ENCODE measurements at regions of chr12 and their contacts with region 1.

Region 1: DNA sequence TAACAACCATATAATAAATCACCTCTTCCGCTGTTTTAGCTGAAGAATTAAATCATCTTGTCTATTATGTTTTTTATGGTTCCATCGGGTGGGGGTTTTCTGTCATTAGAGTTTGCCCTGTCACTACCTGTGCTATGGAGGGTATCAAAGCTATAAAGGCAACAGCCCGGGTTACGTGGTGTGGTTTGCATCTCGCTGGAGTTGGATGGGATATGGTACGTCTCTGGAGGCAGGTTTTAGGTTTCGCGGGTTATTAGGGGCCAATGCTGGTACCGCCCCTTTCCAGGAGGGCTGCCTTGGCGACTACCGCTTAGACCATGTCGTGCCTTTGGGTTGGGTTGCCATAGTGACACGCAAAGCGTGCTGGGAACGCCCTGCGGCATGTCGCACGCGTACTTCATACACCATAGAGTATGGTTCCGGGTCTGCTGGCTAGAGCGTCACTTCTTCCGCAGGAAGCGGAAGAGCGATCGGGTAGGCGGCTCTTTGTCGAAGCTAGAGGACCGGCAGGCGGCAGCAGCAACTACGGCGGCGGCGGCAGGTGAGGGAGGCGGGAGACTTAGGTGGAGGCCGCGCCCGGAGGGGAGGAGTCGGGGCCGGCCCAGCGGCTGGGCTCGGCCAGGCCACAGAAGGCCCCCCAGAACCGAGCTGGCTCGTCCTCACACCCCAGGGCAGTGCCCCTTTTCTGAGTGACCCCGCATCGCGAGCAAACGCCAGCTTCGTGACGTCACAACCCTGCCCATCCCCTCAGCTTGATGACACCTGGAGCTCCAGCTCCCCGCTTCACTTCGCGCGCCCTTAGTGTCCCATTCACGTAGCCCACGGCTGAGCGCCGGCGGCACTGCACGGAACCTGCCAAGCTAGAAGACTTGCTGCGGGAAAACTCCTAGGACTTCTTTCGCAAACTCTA is at the start of gene ZC3H10:
- DNase-seq: peak; percentile 93 to 100 (median 98)
- H3K4me3 ChIP-seq: peak within 1 kb of the TSS; percentile 93
- H3K4me3 Mint-ChIP-seq: peak within 1 kb of the TSS; percentile 89 to 100 (median 99)
- H3K27ac ChIP-seq: peak within 1 kb of the TSS; percentile 99
- H3K27ac Mint-ChIP-seq: peak within 1 kb of the TSS; percentile 96 to 100 (median 98)
- H3K4me1 ChIP-seq: peaks cover 34% of the 10 kb centered on the region
- H3K4me1 Mint-ChIP-seq: peaks cover 37 to 43% (median 38%) of the 10 kb centered on the region in 3 donors
- H3K27me3 ChIP-seq: no peaks in the 10 kb centered on the region
- H3K27me3 Mint-ChIP-seq: peaks cover 0 to 10% of the 10 kb centered on the region in 2 donors
- total RNA-seq, gene ZC3H10: 8.1 to 9.0 TPM

Region 2: DNA sequence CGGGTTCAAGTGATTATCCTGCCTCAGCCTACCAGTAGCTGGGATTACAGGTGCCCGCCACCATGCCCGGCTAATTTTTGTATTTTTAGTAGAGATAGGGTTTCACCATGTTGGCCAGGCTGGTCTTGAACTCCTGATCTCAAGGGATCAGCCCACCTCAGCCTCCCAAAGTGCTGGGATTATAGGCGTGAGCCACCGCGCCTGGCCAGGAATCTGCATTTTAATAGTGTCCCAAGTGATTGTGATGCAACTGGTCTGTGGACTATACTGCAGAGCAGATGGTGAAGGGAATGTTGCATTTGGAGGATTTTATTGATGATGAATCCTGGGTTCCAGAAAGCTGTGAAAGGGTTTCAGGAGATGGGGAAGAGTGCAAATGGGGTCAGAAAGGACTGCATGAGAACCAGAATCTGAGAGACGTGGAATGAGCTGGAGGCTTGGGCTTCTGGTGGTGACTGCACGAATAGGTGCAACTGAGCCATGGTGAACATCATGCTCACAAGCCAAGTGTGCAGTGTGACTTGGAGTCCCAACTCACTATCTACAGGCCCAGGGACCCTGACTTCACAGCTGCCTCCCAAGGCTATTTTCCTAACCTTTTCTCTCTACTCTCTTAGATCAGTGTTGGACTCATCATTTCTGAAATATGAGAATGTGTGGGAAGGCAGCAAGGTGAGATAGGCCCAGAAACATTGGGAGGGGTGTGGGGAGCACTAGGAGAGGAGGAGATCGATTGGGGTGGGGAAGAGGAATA is 71.8 kb before region 1 on chr12:
- CTCF ChIA-PET with region 1: interaction called, 47 read pairs
- POLR2A ChIA-PET with region 1: interaction called, 8 read pairs
- DNase-seq: no peak
- H3K4me3 ChIP-seq: no peak overlapping the region
- H3K4me3 Mint-ChIP-seq: no peak overlapping the region
- H3K27ac ChIP-seq: no peak overlapping the region
- H3K27ac Mint-ChIP-seq: peak overlapping the region in 7 of 8 donors; percentile 50 to 83 (median 63)
- H3K4me1 ChIP-seq: peaks cover 15% of the 10 kb centered on the region
- H3K4me1 Mint-ChIP-seq: peaks cover 26 to 29% (median 29%) of the 10 kb centered on the region in 3 donors
- H3K27me3 ChIP-seq: no peaks in the 10 kb centered on the region
- H3K27me3 Mint-ChIP-seq: peaks cover 0 to 5% of the 10 kb centered on the region in 2 donors

Region 3: GRCh38 chr12:56104109-56104814 is 13.8 kb before region 1 on chr12 and contains the start of gene PA2G4:
- CTCF ChIA-PET with region 1: interaction called, 89 read pairs
- POLR2A ChIA-PET with region 1: interaction called, 115 read pairs
- DNase-seq: peak; percentile 90 to 98 (median 96)
- H3K4me3 ChIP-seq: peak within 1 kb of the TSS; percentile 79
- H3K4me3 Mint-ChIP-seq: peak within 1 kb of the TSS; percentile 97 to 100 (median 98)
- H3K27ac ChIP-seq: peak within 1 kb of the TSS; percentile 82
- H3K27ac Mint-ChIP-seq: peak within 1 kb of the TSS; percentile 95 to 99 (median 98)
- H3K4me1 ChIP-seq: peaks cover 40% of the 10 kb centered on the region
- H3K4me1 Mint-ChIP-seq: peaks cover 61 to 68% (median 62%) of the 10 kb centered on the region in 3 donors
- H3K27me3 ChIP-seq: no peaks in the 10 kb centered on the region
- H3K27me3 Mint-ChIP-seq: no peaks in the 10 kb centered on the region
- total RNA-seq, gene PA2G4: 468 to 504 TPM

Region 4: DNA sequence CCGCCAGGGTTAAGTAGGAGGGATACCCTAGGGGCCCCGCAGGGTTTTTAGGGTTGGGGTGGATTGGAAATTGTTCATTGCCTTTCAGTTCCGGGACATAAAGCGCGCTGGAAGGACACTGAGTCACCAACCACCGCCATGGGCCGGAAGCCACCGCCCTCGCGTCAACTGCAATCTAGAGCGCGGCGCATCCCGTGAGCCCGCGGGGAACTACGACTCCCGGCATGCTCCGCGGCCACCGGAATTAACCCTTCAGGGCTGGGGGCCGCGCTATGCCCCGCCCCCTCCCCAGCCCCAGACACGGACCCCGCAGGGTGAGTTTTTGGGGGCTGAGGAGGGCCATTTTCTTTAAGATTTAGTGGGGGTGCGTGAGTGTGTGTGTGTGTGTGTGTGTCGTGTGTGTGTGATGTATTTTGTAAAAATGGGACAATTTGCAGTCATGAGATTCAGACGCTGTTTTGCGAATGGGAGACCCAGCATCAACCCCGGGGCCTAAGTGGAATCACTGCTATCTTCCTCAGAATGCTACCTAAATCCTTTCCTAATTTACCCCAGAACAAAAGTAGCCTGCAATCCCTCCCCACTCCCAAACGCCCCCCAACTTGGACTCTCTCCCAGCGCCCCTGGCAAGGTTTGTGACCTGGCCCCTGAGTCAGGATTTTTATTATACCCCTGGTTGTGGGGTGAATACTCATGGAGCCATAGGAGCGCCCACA is 34.4 kb after region 1 on chr12 and contains the start of gene MYL6B:
- CTCF ChIA-PET with region 1: interaction called, 16 read pairs
- POLR2A ChIA-PET with region 1: interaction called, 14 read pairs
- DNase-seq: peak; percentile 84 to 94 (median 87)
- H3K4me3 ChIP-seq: peak within 1 kb of the TSS; percentile 60
- H3K4me3 Mint-ChIP-seq: peak within 1 kb of the TSS; percentile 89 to 98 (median 91)
- H3K27ac ChIP-seq: peak within 1 kb of the TSS; percentile 80
- H3K27ac Mint-ChIP-seq: peak within 1 kb of the TSS; percentile 94 to 98 (median 97)
- H3K4me1 ChIP-seq: peaks cover 29% of the 10 kb centered on the region
- H3K4me1 Mint-ChIP-seq: peaks cover 33 to 38% (median 35%) of the 10 kb centered on the region in 3 donors
- H3K27me3 ChIP-seq: no peaks in the 10 kb centered on the region
- H3K27me3 Mint-ChIP-seq: no peaks in the 10 kb centered on the region
- total RNA-seq, gene MYL6B: 68.6 to 70.0 TPM

Region 5: GRCh38 chr12:56224102-56224701 is 106.2 kb after region 1 on chr12 and contains the start of gene NABP2:
- CTCF ChIA-PET with region 1: interaction called, 42 read pairs
- POLR2A ChIA-PET with region 1: interaction called, 16 read pairs
- DNase-seq: peak; percentile 90 to 94 (median 92)
- H3K4me3 ChIP-seq: peak within 1 kb of the TSS; percentile 67
- H3K4me3 Mint-ChIP-seq: peak within 1 kb of the TSS; percentile 86 to 99 (median 93)
- H3K27ac ChIP-seq: peak within 1 kb of the TSS; percentile 62
- H3K27ac Mint-ChIP-seq: peak within 1 kb of the TSS; percentile 90 to 100 (median 100)
- H3K4me1 ChIP-seq: peaks cover 34% of the 10 kb centered on the region
- H3K4me1 Mint-ChIP-seq: peaks cover 42 to 55% (median 53%) of the 10 kb centered on the region in 3 donors
- H3K27me3 ChIP-seq: no peaks in the 10 kb centered on the region
- H3K27me3 Mint-ChIP-seq: peaks cover 0 to 2% of the 10 kb centered on the region in 2 donors
- total RNA-seq, gene NABP2: 102 to 104 TPM